T-cell (primary cell): ENCODE measurements at regions of chr12 and their contacts with region 1.

Region 1: GRCh38 chr12:89461649-89462612 is 62.7 kb downstream of the GALNT4 start:
- DNase-seq: peak in 2 of 35 experiments; percentile 5 to 66
- ATAC-seq: peak; percentile 72 to 88 (median 72)
- H3K4me3 ChIP-seq: no peak overlapping the region
- H3K4me3 Mint-ChIP-seq: peak overlapping the region in 2 of 3 donors; percentile 25 to 45
- H3K27ac ChIP-seq: no peak overlapping the region
- H3K27ac Mint-ChIP-seq: peak overlapping the region; percentile 67 to 70
- H3K4me1 ChIP-seq: no peaks in the 10 kb centered on the region
- H3K4me1 Mint-ChIP-seq: peaks cover 19 to 25% (median 20%) of the 10 kb centered on the region in 3 donors
- H3K27me3 ChIP-seq: no peaks in the 10 kb centered on the region
- H3K27me3 Mint-ChIP-seq: no peaks in the 10 kb centered on the region

Region 2: DNA sequence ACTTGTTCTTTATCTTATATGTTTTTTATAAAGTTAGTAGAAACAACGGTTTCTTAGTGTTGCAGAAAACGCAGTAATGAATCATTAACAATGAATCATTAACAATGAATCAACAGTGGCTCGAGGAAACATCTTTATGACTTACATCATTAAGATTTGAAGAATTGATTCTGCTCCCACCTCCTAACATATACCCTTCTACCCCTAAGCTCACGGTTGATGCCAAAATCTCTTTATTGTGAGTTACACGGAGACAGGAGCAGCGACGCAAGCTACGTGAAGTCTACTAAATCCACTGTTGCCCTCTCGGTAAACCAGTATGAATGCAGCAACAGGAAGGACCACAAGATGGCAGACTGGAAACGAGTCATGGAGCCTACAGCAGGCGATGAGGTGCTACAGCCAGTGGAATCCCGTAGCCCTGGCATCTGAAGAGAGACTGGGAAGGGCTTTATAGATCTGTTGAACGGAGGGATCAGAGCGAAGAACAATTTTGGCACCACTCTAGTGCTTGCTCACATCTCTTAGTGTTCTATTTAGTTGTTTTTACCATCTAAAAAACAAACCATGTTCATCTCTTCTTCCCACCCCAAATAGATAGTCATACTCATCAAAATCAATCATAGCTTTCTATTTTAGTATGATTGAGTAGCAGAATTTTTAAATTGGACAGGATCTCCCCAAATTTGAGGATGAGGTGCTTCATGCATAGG is 442.4 kb before region 1 on chr12:
- CTCF ChIA-PET with region 1: interaction called, 17 to 40 read pairs
- POLR2A ChIA-PET with region 1: interaction called in 1 of 2 experiments, 8 read pairs
- DNase-seq: peak; percentile 37 to 84 (median 59)
- ATAC-seq: peak; percentile 94 to 99 (median 96)
- H3K4me3 ChIP-seq: peak overlapping the region in 1 of 2 donors; percentile 4
- H3K4me3 Mint-ChIP-seq: no peak overlapping the region
- H3K27ac ChIP-seq: no peak overlapping the region
- H3K27ac Mint-ChIP-seq: no peak overlapping the region
- H3K4me1 ChIP-seq: peaks cover 2 to 4% of the 10 kb centered on the region in 2 experiments
- H3K4me1 Mint-ChIP-seq: peaks cover 6 to 8% (median 7%) of the 10 kb centered on the region in 3 donors
- H3K27me3 ChIP-seq: peaks cover 0 to 4% of the 10 kb centered on the region in 2 experiments
- H3K27me3 Mint-ChIP-seq: peaks cover 3 to 10% of the 10 kb centered on the region in 2 donors

Region 3: GRCh38 chr12:89051065-89051677 is 410.8 kb before region 1 on chr12:
- CTCF ChIA-PET with region 1: interaction called, 19 to 20 read pairs
- POLR2A ChIA-PET with region 1: no interaction called
- DNase-seq: peak in 10 of 35 experiments; percentile 2 to 73 (median 14)
- ATAC-seq: peak in 2 of 4 experiments; percentile 62 to 63
- H3K4me3 ChIP-seq: no peak overlapping the region
- H3K4me3 Mint-ChIP-seq: no peak overlapping the region
- H3K27ac ChIP-seq: no peak overlapping the region
- H3K27ac Mint-ChIP-seq: no peak overlapping the region
- H3K4me1 ChIP-seq: no peaks in the 10 kb centered on the region
- H3K4me1 Mint-ChIP-seq: no peaks in the 10 kb centered on the region
- H3K27me3 ChIP-seq: peaks cover 0 to 5% of the 10 kb centered on the region in 2 experiments
- H3K27me3 Mint-ChIP-seq: peaks cover 0 to 5% of the 10 kb centered on the region in 2 donors

Region 4: GRCh38 chr12:89524541-89525285 is 62.8 kb after region 1 on chr12 and contains the start of gene GALNT4:
- CTCF ChIA-PET with region 1: interaction called, 5 to 41 read pairs
- POLR2A ChIA-PET with region 1: no interaction called
- DNase-seq: peak; percentile 30 to 83 (median 62)
- ATAC-seq: peak; percentile 70 to 78 (median 73)
- H3K4me3 ChIP-seq: peak within 1 kb of the TSS; percentile 85 to 89
- H3K4me3 Mint-ChIP-seq: peak within 1 kb of the TSS; percentile 90 to 95 (median 95)
- H3K27ac ChIP-seq: peak within 1 kb of the TSS; percentile 81
- H3K27ac Mint-ChIP-seq: peak within 1 kb of the TSS; percentile 89 to 90
- H3K4me1 ChIP-seq: peaks cover 8 to 23% of the 10 kb centered on the region in 2 experiments
- H3K4me1 Mint-ChIP-seq: peaks cover 41 to 62% (median 59%) of the 10 kb centered on the region in 3 donors
- H3K27me3 ChIP-seq: no peaks in the 10 kb centered on the region
- H3K27me3 Mint-ChIP-seq: no peaks in the 10 kb centered on the region
- total RNA-seq, gene GALNT4: 4.9 to 9.6 (median 6.5) TPM